HEK293 (cell line): ENCODE measurements at regions of chr17 and their contacts with region 1.

Region 1: GRCh38 chr17:56779898-56780733 is 53.6 kb downstream of the C17orf67 start:
- H3K4me3 ChIP-seq: peak overlapping the region; percentile 21
- H3K27ac ChIP-seq: no peak overlapping the region
- H3K4me1 ChIP-seq: no peaks in the 10 kb centered on the region; the same call in 1 of the 2 replicates
- CTCF ChIP-seq: peak; percentile 92

Region 2: GRCh38 chr17:56762988-56763387 is 17.1 kb before region 1 on chr17:
- CTCF ChIA-PET with region 1: interaction called, 16 read pairs
- POLR2A ChIA-PET with region 1: no interaction called
- H3K4me3 ChIP-seq: no peak overlapping the region
- H3K27ac ChIP-seq: no peak overlapping the region
- H3K4me1 ChIP-seq: no peaks in the 10 kb centered on the region
- CTCF ChIP-seq: no peak

Region 3: DNA sequence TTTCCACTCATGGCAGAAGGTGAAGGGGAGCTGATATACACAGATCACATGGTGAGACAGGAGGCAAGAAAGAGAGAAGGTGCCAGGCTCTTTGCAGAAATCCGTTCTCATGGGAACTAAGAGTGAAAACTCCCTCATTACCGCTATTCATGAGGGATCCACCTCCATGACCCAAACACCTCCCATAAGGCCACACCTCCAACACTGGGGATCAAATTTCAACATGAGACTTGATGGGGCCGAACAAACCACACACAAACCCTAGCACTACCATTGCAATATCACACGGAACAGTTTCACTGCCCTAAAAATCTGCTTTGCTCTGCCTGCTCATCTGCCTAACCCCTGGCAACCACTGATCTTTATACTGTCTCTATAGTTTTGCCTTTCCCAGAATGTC is 18.8 kb after region 1 on chr17:
- CTCF ChIA-PET with region 1: interaction called, 11 read pairs
- POLR2A ChIA-PET with region 1: no interaction called
- H3K4me3 ChIP-seq: no peak overlapping the region
- H3K27ac ChIP-seq: no peak overlapping the region
- H3K4me1 ChIP-seq: peaks cover 9% of the 10 kb centered on the region; the same call in 1 of the 2 replicates
- CTCF ChIP-seq: no peak

Region 4: GRCh38 chr17:56939901-56940343 is 159.8 kb after region 1 on chr17:
- CTCF ChIA-PET with region 1: interaction called, 11 read pairs
- POLR2A ChIA-PET with region 1: no interaction called
- H3K4me3 ChIP-seq: no peak overlapping the region
- H3K27ac ChIP-seq: no peak overlapping the region
- H3K4me1 ChIP-seq: no peaks in the 10 kb centered on the region
- CTCF ChIP-seq: peak; percentile 51